Endothelial cell of umbilical vein (primary cell): ENCODE measurements at regions of chr16 and their contacts with region 1.

Region 1: DNA sequence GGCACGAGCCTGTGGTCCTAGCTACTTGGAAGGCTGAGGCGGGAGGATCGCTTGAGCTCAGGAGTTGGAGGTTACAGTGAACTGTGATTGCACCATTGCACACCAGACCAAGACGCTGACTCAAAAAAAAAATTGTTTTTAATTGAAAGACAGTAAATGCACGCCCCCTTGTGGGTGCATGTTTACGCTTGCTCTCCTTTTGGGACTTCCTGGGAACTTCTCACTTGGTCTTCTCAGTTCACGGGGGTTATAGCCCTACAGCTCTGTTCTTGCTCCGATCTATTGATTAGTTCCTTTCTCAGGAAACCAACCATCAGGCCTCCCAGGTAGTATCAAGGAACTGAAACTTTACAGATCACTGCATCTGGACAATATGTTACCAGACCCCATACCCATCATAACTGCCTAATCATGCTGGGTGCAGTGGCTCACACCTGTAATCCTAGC is 14.2 kb upstream of the RIPOR1 start:
- DNase-seq: peak; percentile 66
- H3K4me3 ChIP-seq: no peak overlapping the region
- H3K27ac ChIP-seq: no peak overlapping the region
- H3K4me1 ChIP-seq: peaks cover 13% of the 10 kb centered on the region
- H3K27me3 ChIP-seq: no peaks in the 10 kb centered on the region
- CTCF ChIP-seq: peak; percentile 58 to 68
- POLR2A ChIP-seq: no peak

Region 2: DNA sequence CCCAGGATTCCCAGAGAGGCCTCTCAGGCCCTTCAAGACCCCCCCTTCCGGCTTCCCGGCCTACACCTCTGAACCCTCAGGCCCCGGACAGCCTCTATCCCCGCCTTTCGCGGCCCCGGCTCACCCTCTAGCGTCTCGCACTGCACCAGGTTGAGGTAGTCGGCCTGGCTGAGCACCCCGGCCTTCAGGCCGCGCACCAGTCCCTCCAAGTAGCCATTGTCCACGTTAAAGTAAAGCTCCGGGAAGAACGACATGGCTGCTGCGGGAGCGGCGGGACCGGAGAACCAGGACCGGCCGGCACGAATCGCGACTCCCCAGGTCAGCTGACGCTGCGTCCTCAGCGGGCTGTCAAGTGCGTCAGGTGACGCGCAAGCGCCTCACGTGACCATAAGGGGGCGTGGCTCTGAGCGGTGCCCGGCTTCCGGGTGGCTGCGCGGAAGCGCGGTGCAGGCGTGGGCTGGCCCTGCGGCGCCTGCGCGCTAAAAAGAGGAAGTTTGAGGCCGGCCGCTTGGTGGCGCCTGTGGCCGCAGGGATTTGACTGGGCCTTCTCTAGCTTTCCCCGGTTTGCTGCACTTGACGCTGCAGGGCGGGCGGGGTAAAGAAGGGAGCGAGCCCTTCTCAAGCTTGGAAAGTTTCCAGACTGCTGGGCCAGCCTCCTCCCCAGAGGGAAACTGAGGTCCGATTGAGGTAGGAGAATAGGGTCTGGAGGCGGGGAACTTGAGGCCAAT is 33.4 kb before region 1 on chr16 and contains the start of gene ATP6V0D1:
- CTCF ChIA-PET with region 1: interaction called, 133 read pairs
- POLR2A ChIA-PET with region 1: no interaction called
- dilution Hi-C with region 1: no loop called
- intact Hi-C with region 1: loop called (anchors 1 kb)
- DNase-seq: peak; percentile 99
- H3K4me3 ChIP-seq: peak within 1 kb of the TSS; percentile 69 to 80 (median 77)
- H3K27ac ChIP-seq: peak within 1 kb of the TSS; percentile 73
- H3K4me1 ChIP-seq: peaks cover 22% of the 10 kb centered on the region
- H3K27me3 ChIP-seq: no peaks in the 10 kb centered on the region
- CTCF ChIP-seq: peak; percentile 96
- POLR2A ChIP-seq: peak; percentile 74
- total RNA-seq, gene ATP6V0D1: 77.1 and 82.8 TPM in 2 replicates

Region 3: DNA sequence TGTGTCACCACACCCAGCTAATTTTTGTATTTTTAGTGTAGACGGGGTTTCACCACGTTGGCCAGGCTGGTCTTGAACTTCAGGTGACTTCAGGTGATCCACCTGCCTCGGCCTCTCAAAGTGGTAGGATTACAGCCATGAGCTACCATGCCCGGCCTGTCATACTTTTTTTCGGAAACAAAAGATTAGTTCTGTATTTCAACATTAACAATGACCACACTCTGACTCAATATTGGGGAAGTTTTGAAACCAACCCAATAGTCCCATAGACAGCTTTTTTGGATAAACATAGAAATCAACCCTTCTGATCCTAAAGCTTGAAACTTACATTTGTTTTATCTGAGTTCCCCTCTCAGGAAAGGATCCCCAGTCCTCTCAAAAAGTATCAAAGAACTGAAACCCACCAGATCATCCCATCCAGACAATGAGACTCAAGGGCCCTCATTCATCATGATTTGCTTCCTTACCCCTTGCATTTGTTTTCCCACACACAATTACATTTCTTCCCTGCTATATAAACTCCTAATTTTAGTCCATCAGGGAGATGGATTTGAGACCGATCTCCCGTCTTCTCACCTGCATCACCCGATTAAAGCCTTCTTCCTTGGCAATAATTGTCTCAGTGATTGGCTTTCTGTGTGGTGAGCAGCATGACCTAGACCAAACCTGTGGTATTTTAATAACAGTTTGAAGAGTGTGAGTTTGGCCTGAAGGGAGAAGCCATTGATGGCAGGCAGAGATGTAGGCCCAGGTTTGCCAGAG is 23.9 kb before region 1 on chr16:
- CTCF ChIA-PET with region 1: interaction called, 247 read pairs
- POLR2A ChIA-PET with region 1: interaction called, 3 read pairs
- dilution Hi-C with region 1: no loop called
- intact Hi-C with region 1: loop called (anchors 1 kb)
- DNase-seq: no peak
- H3K4me3 ChIP-seq: no peak overlapping the region
- H3K27ac ChIP-seq: no peak overlapping the region
- H3K4me1 ChIP-seq: peaks cover 13% of the 10 kb centered on the region
- H3K27me3 ChIP-seq: no peaks in the 10 kb centered on the region
- CTCF ChIP-seq: no peak
- POLR2A ChIP-seq: no peak

Region 4: GRCh38 chr16:67499106-67499505 is 15.3 kb before region 1 on chr16:
- CTCF ChIA-PET with region 1: interaction called, 247 read pairs
- POLR2A ChIA-PET with region 1: interaction called, 3 read pairs
- dilution Hi-C with region 1: no loop called
- intact Hi-C with region 1: loop called (anchors 1 kb)
- DNase-seq: no peak
- H3K4me3 ChIP-seq: no peak overlapping the region
- H3K27ac ChIP-seq: no peak overlapping the region
- H3K4me1 ChIP-seq: no peaks in the 10 kb centered on the region
- H3K27me3 ChIP-seq: no peaks in the 10 kb centered on the region
- CTCF ChIP-seq: no peak
- POLR2A ChIP-seq: no peak

Region 5: DNA sequence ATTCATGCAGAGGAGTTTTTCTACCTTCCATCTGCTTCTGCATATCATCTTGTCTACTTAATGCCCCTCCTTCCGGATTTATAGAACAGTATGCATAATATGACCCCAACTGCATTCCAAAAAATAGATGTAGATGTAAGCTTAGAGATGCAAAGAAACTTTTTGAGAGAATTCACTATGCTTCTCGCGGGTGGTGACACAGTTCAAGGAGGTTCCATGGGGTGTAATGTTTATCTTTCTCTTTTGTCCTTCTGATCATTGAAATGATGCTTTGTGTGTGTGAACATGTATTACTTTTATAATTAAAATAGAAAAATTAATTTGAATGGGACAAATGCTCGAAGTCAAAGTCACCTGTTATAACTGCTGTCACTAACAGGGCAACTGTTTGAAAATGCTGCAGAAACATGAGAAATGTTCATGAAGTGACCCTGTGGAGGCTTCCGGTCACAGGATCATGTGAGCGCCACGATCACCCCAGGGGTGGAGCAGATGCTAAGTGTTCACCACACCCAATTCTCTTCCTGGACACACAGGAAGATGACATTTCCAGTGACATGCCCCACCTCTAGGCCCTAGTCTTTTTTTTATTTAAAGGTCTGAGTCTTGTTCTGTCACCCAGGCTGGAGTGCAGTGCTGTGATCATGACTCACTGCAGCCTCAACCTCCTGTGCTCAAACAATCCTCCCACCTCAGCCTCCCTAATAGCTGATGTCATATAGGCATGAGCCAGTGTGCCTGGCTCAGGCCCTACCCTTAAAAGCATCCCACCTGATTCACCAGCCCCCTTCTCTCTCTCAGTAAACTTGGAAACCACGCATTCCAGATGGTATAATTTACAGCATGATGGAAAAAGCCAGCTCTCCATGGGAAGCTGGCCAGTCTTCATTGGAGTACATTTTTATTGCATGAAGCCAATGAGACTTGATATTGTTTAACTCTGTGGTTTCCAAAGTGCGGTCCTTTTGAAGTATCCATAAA is 10.1 kb before region 1 on chr16:
- CTCF ChIA-PET with region 1: interaction called, 20 read pairs
- POLR2A ChIA-PET with region 1: no interaction called
- dilution Hi-C with region 1: no loop called
- intact Hi-C with region 1: no loop called
- DNase-seq: no peak
- H3K4me3 ChIP-seq: no peak overlapping the region
- H3K27ac ChIP-seq: no peak overlapping the region
- H3K4me1 ChIP-seq: no peaks in the 10 kb centered on the region
- H3K27me3 ChIP-seq: no peaks in the 10 kb centered on the region
- CTCF ChIP-seq: no peak
- POLR2A ChIP-seq: no peak

Region 6: DNA sequence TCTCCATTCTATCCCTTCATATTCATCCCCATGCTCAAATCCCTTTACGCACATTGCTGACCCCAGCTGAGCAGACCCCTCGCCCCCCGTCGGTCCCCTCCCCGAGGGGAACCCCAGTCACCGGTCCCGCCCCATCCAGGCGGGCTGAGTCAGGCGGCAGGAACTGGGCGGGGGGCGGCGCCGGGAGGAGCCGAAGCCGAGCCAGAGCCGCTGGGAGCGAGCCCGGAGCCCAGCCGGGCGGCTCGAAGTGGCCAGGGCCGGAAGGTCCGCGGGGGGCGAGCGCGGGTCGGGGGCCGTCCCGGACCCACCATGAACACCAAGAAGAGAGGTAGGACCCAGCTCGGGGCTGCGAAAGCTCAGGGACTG is 22.8 kb after region 1 on chr16:
- CTCF ChIA-PET with region 1: interaction called, 246 read pairs
- POLR2A ChIA-PET with region 1: no interaction called
- dilution Hi-C with region 1: no loop called
- intact Hi-C with region 1: no loop called
- DNase-seq: peak; percentile 79
- H3K4me3 ChIP-seq: peak overlapping the region; percentile 73 to 89 (median 88)
- H3K27ac ChIP-seq: peak overlapping the region; percentile 93
- H3K4me1 ChIP-seq: peaks cover 24% of the 10 kb centered on the region
- H3K27me3 ChIP-seq: no peaks in the 10 kb centered on the region
- CTCF ChIP-seq: no peak
- POLR2A ChIP-seq: peak; percentile 80

Region 7: DNA sequence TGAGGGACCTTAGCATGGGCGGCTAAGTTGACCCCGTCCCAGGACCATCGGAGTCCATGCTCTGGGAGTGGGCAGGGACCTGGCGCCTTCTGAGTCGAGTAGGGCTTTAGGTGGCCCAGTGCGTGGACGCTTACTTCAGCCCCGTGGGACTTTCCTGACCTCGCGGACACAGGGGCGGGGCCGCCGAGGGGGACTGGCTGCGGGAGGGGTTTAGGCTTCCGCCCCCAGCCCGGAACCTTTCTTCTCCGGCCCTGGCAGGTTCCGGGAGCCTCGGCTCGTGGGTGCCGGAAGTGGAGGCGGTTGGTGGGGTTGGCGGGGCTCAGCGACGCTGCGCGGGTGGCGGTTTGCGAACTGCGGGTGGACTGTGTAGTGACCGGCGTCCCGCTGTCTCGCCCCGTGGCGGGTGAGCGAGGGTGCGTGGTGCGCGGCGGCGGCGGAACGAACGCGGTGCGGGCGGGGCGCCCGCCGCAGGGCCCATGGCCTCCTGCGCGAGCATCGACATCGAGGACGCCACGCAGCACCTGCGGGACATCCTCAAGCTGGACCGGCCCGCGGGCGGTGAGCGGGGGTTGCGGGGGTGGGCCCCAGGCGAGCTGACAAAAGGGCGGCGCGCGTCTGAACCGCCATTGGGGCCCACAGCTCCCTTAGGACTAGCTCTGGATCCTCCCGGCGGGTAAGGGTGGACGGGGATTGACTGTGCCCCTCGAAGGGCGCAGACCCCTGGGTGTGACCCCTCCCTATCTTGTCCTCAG is 358.6 kb after region 1 on chr16 and contains the start of gene EDC4:
- CTCF ChIA-PET with region 1: no interaction called
- POLR2A ChIA-PET with region 1: no interaction called
- dilution Hi-C with region 1: no loop called
- intact Hi-C with region 1: no loop called
- DNase-seq: peak; percentile 78
- H3K4me3 ChIP-seq: peak within 1 kb of the TSS; percentile 66 to 79 (median 67)
- H3K27ac ChIP-seq: peak within 1 kb of the TSS; percentile 40
- H3K4me1 ChIP-seq: peaks cover 15% of the 10 kb centered on the region
- H3K27me3 ChIP-seq: no peaks in the 10 kb centered on the region
- CTCF ChIP-seq: no peak
- POLR2A ChIP-seq: peak; percentile 91
- total RNA-seq, gene EDC4: 68.0 and 81.2 TPM in 2 replicates